ENCODE measurements at regions of chr4 and their contacts with region 1.

Region 1: DNA sequence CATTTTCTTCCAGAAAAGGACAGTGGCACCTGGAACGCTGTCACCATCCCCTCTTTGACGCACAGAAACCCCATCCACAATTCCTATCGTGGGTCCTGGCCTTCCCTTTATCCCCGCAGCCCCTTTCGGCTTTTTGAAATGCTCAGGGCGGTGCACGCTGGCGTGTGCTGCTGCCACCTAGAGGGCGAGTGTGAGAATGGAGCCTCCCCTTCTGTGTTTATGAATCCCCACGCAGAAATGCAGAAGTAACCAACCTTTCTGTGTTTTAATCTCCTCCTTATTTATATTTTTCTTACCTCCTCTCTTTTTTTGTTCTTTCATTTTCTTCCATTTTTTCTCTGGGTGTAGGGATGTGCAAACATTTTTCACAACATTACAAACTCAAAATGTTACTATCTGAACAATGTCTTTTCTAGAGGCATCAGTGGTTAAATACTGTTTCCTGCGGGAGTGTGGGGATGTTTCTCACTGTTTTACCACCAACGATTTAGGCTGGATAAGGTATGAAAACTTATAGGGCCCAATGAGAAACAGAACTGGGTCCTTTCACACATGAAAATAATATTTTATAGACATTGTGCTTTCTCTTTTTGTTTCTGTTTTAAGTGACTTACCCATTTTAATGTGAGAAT is 50.0 kb downstream of the TMA16 start:
- DNase-seq: peak; percentile 40
- ATAC-seq: peak; percentile 54
- H3K4me3 ChIP-seq: peak overlapping the region; percentile 26
- H3K27ac ChIP-seq: no peak overlapping the region
- H3K4me1 ChIP-seq: peaks cover 9% of the 10 kb centered on the region
- H3K27me3 ChIP-seq: no peaks in the 10 kb centered on the region
- CTCF ChIP-seq: peak; percentile 85
- POLR2A ChIP-seq: no peak
- RAD21 ChIP-seq: peak; percentile 69

Region 2: DNA sequence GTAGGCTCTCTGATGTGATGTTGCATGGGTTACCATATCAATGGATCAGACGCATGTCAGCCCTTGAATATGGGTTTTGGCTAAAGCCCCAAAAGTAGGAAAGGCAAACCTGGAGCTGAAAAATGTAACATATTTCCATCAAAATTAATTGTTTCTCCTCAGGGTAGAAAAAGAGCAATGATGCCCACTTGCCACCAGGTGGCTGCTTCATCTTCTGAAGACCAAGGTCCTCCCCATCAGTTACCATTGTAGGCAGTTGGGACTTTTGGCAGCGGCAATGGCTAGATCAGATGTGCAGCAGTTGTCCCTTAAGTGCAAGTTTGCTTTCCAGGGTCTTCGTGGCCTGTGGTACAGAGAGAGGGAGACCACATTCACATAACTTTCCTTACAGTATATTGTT is 496.1 kb before region 1 on chr4:
- CTCF ChIA-PET with region 1: no interaction called
- POLR2A ChIA-PET with region 1: no interaction called
- dilution Hi-C with region 1: no loop called
- in situ Hi-C with region 1: no loop called
- intact Hi-C with region 1: loop called (anchors 2 kb)
- DNase-seq: peak; percentile 19
- ATAC-seq: peak; percentile 51; the same call in 1 of the 2 replicates
- H3K4me3 ChIP-seq: no peak overlapping the region
- H3K27ac ChIP-seq: no peak overlapping the region
- H3K4me1 ChIP-seq: no peaks in the 10 kb centered on the region
- H3K27me3 ChIP-seq: no peaks in the 10 kb centered on the region
- CTCF ChIP-seq: peak; percentile 59
- POLR2A ChIP-seq: no peak
- RAD21 ChIP-seq: peak; percentile 53

Region 3: GRCh38 chr4:163166041-163166579 is 378.4 kb before region 1 on chr4:
- CTCF ChIA-PET with region 1: no interaction called
- POLR2A ChIA-PET with region 1: no interaction called
- dilution Hi-C with region 1: no loop called
- in situ Hi-C with region 1: no loop called
- intact Hi-C with region 1: loop called (anchors 10 kb)
- DNase-seq: peak; percentile 33
- ATAC-seq: peak; percentile 56
- H3K4me3 ChIP-seq: peak overlapping the region; percentile 74
- H3K27ac ChIP-seq: peak overlapping the region; percentile 68
- H3K4me1 ChIP-seq: no peaks in the 10 kb centered on the region; the same call in 1 of the 2 replicates
- H3K27me3 ChIP-seq: no peaks in the 10 kb centered on the region
- CTCF ChIP-seq: no peak
- POLR2A ChIP-seq: peak; percentile 71; the same call in 1 of the 2 replicates
- RAD21 ChIP-seq: no peak

Region 4: DNA sequence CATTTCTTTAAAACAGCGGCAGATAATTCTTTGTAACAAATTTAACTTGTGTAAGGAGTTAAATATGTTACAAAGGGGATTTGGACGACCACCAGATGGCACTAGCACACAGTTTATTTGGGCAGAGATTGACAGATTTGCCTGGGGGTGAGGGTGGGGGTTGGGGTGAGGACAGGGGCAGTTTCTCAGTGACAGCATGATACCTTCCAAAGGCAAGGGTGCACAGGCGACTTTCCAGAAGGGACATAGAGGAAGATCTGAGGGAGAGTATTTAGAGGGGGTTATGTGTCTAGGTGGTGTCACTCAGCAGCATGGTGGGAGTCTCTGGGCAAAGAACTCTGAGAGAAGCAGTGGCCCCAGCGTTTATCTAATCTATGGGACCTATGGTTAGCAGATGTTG is 59.6 kb before region 1 on chr4:
- CTCF ChIA-PET with region 1: interaction called, 6 read pairs
- POLR2A ChIA-PET with region 1: no interaction called
- dilution Hi-C with region 1: no loop called
- in situ Hi-C with region 1: no loop called
- intact Hi-C with region 1: loop called (anchors 1 kb)
- DNase-seq: peak; percentile 51
- ATAC-seq: peak; percentile 72
- H3K4me3 ChIP-seq: no peak overlapping the region
- H3K27ac ChIP-seq: no peak overlapping the region
- H3K4me1 ChIP-seq: no peaks in the 10 kb centered on the region
- H3K27me3 ChIP-seq: peaks cover 7% of the 10 kb centered on the region
- CTCF ChIP-seq: peak; percentile 65
- POLR2A ChIP-seq: no peak
- RAD21 ChIP-seq: peak; percentile 67

Region 5: GRCh38 chr4:164731827-164732474 is 1187.4 kb after region 1 on chr4:
- CTCF ChIA-PET with region 1: interaction called, 26 read pairs
- POLR2A ChIA-PET with region 1: no interaction called
- dilution Hi-C with region 1: no loop called
- in situ Hi-C with region 1: no loop called
- intact Hi-C with region 1: no loop called
- DNase-seq: peak; percentile 28
- ATAC-seq: peak; percentile 68; the same call in 1 of the 2 replicates
- H3K4me3 ChIP-seq: no peak overlapping the region
- H3K27ac ChIP-seq: no peak overlapping the region
- H3K4me1 ChIP-seq: no peaks in the 10 kb centered on the region
- H3K27me3 ChIP-seq: no peaks in the 10 kb centered on the region
- CTCF ChIP-seq: peak; percentile 73
- POLR2A ChIP-seq: no peak
- RAD21 ChIP-seq: peak; percentile 72